ENCODE measurements at regions of chr17 and their contacts with region 1.

Region 1: GRCh38 chr17:19492141-19492540 is 41.5 kb upstream of the SLC47A1 start:
- DNase-seq: no peak
- H3K4me3 ChIP-seq: no peak overlapping the region
- CTCF ChIP-seq: no peak

Region 2: DNA sequence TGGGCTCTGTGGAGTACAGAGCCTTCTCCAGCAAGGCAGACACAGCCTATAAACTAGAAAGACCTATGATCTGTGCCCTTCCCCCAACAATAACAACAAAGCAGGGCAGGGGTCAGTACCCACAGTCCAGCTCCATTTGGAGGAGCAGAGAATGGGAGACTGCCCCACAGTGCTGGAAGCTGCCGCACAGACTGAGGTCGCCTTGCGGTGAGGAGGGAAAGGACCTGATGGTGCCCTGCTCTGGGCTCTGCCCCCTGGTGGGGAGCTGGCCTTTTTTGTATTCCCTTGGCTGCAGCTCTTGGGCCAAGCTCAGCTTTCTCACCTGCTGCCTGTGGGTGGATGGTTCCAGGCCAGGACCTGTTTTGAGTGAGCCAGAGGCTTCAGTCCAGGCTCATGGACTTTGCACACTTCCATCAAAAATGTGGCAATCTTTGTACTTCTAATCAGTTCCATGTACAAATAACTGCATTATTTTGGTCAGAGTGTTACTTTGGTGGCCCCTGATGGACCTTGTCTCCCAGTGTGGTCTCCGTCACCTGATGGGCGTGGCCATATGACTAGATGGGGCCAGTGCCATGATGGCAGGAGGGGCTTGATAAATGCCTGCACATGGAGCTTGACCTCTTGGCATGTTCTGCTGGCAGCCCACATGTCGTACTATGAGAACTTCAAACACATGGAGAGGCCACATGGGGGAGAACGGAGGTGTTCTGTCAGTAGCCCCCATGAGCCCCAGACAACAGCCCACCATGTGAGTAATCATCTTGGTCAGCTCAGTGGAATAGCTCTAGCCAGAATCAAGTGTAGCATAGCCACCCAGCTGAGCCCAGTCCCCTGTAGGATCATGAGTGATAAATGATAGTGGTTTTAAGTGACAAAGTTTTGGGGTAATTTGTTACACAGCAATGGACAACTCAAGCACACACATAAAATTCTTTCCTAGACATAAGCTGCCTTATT is 153.8 kb before region 1 on chr17:
- CTCF ChIA-PET with region 1: no interaction called
- POLR2A ChIA-PET with region 1: no interaction called
- DNase-seq: no peak
- H3K4me3 ChIP-seq: no peak overlapping the region
- CTCF ChIP-seq: peak; percentile 50

Region 3: DNA sequence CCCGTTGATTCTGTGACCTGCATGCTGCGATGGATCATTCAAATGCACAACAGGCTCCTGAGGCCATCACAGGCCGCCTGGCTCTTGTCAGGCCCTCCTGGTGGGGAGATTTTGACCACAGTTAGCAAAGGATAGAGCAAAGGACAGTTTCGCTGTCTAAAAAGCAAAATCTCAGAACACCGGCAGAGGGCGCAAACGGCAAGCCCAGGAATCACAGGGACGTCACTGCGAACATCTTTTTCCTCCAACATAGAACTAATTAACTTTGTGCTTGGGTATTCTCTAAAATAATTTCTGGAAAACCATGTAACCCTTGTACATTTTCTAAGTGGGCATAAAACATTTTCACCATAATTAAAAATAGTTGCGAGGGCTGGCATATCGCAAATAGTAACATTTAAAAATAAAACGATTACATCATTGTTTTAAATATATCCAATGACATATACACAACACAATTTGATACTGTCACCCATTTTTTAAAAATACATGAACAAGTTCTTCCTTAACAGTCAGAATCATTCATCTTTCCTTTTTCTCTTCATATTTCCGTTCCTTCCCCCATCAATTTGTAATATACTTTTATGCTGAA is 21.9 kb after region 1 on chr17:
- CTCF ChIA-PET with region 1: interaction called, 10 read pairs
- POLR2A ChIA-PET with region 1: no interaction called
- DNase-seq: no peak
- H3K4me3 ChIP-seq: no peak overlapping the region
- CTCF ChIP-seq: peak; percentile 84

Region 4: DNA sequence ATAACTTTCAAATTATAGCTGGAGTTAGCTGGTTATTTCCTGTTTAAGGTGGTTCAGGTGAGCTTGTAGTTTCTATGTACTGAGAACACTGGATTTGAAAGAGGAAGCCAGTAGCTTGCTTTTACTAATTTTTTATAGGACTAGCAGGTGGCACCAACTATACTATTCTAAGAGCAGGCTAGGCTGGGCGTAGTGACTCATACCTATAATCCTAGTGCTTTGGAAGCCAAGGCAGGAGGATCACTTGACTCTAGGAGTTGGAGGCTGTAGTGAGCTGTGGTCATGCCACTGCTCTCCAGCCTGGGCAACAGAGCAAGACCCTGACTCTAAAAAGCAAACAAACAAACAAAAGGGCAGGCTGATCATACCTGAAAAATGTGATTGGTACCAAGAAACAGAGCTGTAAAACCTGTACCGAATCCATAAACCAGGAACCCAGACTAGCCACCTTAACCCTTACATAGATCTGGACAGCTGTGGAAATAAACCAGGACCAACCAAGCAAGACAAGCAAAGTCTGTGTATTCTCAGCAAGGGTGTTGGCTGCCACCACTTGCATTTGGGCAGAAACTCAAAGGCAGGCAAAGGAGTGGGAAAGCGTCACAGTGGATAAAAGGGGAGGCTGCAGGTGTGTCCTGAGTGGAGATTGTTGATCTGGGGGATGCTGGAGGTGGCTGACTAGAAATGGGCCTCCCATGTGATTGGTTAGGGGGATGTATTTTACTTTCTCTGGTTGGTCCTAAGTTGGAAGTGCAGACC is 77.8 kb after region 1 on chr17:
- CTCF ChIA-PET with region 1: no interaction called
- POLR2A ChIA-PET with region 1: no interaction called
- DNase-seq: no peak
- H3K4me3 ChIP-seq: no peak overlapping the region
- CTCF ChIP-seq: no peak